ENCODE measurements at regions of chr3 and their contacts with region 1.

Region 1: GRCh38 chr3:39499651-39500240 is 32.3 kb downstream of the MOBP start:
- DNase-seq: no peak
- ATAC-seq: no peak
- H3K4me3 ChIP-seq: no peak overlapping the region
- H3K27ac ChIP-seq: no peak overlapping the region
- H3K4me1 ChIP-seq: peaks cover 0 to 8% (median 0%) of the 10 kb centered on the region in 12 donors
- H3K27me3 ChIP-seq: peaks cover 6 to 54% (median 23%) of the 10 kb centered on the region in 9 donors
- CTCF ChIP-seq: no peak
- POLR2A ChIP-seq: no peak

Region 2: DNA sequence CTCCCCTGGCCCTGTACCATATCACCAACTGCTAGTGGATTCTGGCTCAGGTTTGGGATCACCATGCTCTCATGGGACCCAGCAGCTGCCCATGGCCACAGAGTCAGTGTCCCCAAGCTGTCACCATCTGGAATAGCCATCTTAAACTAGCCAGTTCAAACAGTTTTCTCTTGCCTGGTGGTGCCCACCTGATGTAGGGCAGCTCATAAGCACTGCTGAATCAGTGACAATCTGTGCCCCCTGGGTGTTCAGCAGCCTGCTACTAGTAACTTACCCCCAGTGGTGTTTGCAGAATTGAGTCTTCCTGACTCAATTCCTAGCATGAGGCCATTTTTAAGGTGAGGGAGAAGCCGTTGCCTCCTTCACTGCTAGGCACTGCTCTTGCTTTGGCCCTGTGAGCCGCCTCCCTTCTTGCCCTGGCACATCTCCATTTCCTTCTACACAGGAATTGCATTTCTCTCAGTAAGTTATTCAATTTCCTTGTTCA is 85.3 kb before region 1 on chr3:
- intact Hi-C with region 1: loop called in 6 of 10 experiments (anchors 1 to 5 kb)
- DNase-seq: no peak
- ATAC-seq: peak; percentile 41 to 73 (median 66)
- H3K4me3 ChIP-seq: no peak overlapping the region
- H3K27ac ChIP-seq: peak overlapping the region in 2 of 12 donors; percentile 17 to 47
- H3K4me1 ChIP-seq: peaks cover 0 to 33% (median 11%) of the 10 kb centered on the region in 12 donors
- H3K27me3 ChIP-seq: no peaks in the 10 kb centered on the region
- CTCF ChIP-seq: no peak
- POLR2A ChIP-seq: no peak

Region 3: GRCh38 chr3:39419730-39420315 is 79.9 kb before region 1 on chr3:
- intact Hi-C with region 1: loop called in 9 of 10 experiments (anchors 1 to 5 kb)
- DNase-seq: no peak
- ATAC-seq: no peak
- H3K4me3 ChIP-seq: no peak overlapping the region
- H3K27ac ChIP-seq: no peak overlapping the region
- H3K4me1 ChIP-seq: peaks cover 0 to 7% (median 0%) of the 10 kb centered on the region in 12 donors
- H3K27me3 ChIP-seq: no peaks in the 10 kb centered on the region
- CTCF ChIP-seq: no peak
- POLR2A ChIP-seq: no peak

Region 4: DNA sequence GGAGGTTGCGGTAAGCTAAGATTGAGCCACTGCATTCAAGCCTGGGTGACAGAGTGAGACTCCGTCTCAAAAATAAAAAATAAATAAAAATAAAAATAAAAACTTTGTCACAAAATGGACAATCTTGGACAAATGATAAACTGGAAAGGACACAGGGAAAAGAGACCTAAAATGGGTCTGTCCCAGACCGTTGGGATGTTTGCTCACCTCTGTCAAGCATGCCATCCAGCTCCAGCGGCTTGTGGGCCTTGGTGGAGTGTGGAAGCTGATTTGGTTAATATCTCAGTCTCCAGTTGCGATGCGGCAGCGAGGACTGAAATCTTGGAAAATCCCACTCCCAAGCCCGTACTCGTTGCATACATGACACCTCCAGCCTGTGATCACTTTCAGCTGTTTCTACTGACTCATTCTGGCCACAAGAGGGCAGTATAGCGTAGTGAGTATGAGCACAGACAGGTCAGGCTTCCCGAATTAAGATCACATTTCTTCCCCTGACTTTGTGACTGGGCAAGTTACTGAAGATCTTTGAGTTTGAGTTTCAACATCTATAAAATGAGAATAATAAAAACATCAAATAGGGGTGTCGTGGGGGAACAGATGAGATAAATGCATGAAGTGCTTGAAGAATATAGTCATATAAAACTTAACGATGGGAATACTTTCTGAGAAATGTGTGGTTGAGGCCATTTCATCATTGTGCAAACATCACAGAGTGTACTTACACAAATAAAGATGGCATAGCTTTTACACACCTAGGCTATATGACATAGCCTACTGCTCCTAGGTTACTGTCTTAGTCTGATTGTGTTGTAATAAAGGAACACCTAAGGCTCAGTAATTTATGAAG is 51.9 kb before region 1 on chr3:
- intact Hi-C with region 1: loop called (anchors 1 to 10 kb)
- DNase-seq: peak in 4 of 5 donors; percentile 42 to 67 (median 55)
- ATAC-seq: peak; percentile 86 to 94 (median 90)
- H3K4me3 ChIP-seq: no peak overlapping the region
- H3K27ac ChIP-seq: no peak overlapping the region
- H3K4me1 ChIP-seq: peaks cover 0 to 7% (median 0%) of the 10 kb centered on the region in 12 donors
- H3K27me3 ChIP-seq: no peaks in the 10 kb centered on the region
- CTCF ChIP-seq: peak; percentile 77 to 93 (median 86)
- POLR2A ChIP-seq: no peak

Measured in heart left ventricle (tissue), 16 donors.